Posterior vena cava (tissue), 2 donors: ENCODE measurements at regions of chr4 and their contacts with region 1.

Region 1: DNA sequence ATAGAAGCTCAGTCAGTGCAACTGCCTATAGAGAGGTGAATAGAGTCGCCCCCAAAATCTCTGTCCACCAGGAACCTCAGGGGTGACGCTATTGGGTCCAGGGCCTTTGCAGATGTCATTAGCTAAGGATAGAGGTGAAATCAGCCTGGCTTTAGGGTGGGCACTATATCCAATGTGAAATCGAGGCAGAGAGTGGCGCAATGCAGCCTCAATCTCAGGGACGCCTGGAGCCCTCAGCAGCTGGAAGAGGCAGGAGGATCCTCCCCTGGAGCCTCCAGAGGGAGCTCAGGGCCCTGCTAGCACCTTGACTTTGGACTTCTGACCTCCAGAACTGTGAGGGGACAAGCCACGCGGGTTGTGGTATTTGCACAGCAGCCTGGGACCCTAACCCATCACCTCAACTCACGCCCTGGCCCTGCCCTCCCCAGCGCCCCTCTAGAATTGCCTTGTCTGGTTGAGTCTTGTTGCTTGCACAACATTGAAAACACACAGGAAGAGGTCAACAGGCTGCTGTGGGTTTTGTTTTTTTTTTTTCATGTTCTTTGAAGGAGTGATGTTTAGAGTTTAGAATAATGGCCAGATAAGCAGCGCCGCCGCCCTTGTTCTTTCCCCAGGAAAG is 89.4 kb upstream of the PSAPL1 start:
- DNase-seq: no peak

Region 2: GRCh38 chr4:7506119-7506518 is 18.1 kb before region 1 on chr4:
- intact Hi-C with region 1: loop called in 1 of 2 experiments (anchors 1 kb)
- DNase-seq: no peak

Region 3: DNA sequence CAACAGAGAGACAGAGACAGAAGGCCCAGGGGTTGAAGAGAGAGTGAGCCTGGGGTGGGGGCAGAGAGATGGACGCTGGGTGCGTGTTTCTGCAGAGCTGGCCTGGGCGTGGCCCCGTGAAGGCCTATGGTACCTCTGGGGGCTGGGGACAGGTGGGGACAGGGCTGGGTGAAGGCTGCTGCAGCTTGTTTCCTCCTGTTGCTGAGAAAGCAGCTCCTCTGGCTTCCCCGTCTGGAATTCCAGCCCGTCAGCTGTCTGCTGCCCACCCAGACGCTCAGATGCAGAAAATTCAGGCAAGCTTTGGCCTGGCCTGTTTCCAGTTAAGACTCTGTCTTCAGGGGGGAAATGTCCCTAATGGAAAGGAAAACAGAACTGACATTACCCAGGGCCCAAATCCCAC is 12.6 kb before region 1 on chr4:
- intact Hi-C with region 1: loop called in 1 of 2 experiments (anchors 1 kb)
- DNase-seq: no peak

Region 4: DNA sequence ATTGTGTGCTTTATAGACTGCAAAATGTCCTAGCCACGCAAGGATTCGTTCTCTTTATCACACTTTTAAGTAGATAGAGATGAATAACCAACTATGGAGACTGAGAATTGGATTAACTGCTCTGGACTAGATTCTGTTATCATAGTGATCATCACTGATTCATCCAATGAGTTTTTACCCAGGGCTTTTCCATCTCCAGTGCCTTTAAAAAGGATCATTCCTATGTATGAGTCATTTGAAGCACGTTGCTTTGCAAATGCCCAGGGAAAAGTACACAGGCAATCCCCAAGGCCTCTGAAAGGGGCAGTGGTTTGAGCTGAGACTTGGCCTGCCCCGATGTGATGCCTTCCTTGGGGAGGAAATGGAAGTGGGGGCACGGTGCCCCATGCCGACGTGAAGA is 33.3 kb after region 1 on chr4:
- intact Hi-C with region 1: no loop called
- DNase-seq: peak; percentile 47

Region 5: GRCh38 chr4:7569810-7570773 is 45.9 kb after region 1 on chr4:
- intact Hi-C with region 1: loop called in 1 of 2 experiments (anchors 1 kb)
- DNase-seq: peak; percentile 68